ENCODE measurements at regions of chr16 and their contacts with region 1.

Region 1: DNA sequence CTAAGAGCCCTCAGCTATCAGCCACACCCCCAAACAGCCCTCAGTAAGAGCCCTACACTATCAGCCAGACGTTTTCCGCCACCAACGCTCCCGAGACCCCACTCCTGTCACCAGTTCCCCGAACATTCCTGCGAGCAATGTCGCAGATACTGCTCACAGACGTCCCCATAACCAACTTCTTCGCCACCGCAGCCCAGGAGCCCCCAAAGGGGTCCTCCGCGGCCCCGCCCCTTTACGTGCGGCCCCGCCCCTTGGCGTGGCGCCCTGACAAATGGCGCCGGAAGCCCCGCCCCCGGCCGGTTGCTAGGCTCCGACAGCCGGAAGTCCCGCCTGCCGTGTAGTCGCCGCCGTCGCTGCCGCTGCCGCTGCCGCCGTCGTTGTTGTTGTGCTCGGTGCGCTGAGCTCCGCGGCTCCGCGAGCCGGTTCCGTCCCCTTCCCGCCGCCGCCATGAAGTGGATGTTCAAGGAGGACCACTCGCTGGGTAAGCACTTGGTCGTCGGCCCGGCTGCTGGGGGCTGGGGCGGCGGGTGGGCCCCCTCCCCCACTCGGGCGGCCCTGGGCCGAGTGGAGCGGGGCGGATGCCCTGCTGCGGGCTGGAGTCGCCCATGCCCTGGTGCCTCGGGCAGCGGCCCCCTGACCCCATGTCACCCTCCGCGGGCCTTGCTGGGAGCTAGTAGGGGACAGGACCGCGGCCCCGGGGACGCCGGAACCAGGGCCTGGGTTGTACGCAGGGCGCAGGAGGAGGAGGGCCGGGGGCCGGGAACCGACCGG is at the start of gene GABARAPL2:
- DNase-seq: peak; percentile 95
- total RNA-seq, gene GABARAPL2: 233 TPM

Region 2: DNA sequence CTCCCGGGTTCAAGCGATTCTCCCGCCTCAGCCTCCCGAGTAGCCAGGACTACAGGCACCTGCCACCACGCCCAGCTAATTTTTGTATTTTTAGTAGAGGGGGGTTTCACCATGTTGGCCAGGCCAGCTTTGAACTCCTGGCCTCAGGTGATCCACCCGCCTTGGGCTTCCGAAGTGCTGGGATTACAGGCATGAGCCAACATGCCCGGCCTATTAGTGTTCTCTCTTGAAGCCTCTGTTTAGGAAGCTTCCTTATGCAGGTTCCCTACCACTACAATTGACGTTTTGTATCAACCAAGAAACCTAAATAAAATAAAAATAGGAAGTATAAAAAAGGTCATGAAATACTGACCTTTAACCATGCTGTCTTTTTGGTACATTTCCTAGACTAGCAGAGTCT is 46.3 kb before region 1 on chr16:
- intact Hi-C with region 1: loop called (anchors 5 kb)
- DNase-seq: no peak

Measured in cardiac septum (tissue), 1 donor.